CD4-positive, alpha-beta T cell (primary cell): ENCODE measurements at regions of chr15 and their contacts with region 1.

Region 1: GRCh38 chr15:75639709-75640482 is at the start of gene IMP3:
- DNase-seq: peak; percentile 84 to 97 (median 90)
- ATAC-seq: peak; percentile 90
- H3K4me3 ChIP-seq: peak within 1 kb of the TSS; percentile 95
- H3K4me3 Mint-ChIP-seq: peak within 1 kb of the TSS; percentile 89
- H3K27ac ChIP-seq: peak within 1 kb of the TSS; percentile 92
- H3K27ac Mint-ChIP-seq: peak within 1 kb of the TSS; percentile 85
- H3K4me1 ChIP-seq: peaks cover 56% of the 10 kb centered on the region
- H3K4me1 Mint-ChIP-seq: peaks cover 35% of the 10 kb centered on the region
- H3K27me3 ChIP-seq: no peaks in the 10 kb centered on the region
- H3K27me3 Mint-ChIP-seq: no peaks in the 10 kb centered on the region
- CTCF ChIP-seq: no peak
- total RNA-seq, gene IMP3: 48.4 to 50.4 TPM

Region 2: DNA sequence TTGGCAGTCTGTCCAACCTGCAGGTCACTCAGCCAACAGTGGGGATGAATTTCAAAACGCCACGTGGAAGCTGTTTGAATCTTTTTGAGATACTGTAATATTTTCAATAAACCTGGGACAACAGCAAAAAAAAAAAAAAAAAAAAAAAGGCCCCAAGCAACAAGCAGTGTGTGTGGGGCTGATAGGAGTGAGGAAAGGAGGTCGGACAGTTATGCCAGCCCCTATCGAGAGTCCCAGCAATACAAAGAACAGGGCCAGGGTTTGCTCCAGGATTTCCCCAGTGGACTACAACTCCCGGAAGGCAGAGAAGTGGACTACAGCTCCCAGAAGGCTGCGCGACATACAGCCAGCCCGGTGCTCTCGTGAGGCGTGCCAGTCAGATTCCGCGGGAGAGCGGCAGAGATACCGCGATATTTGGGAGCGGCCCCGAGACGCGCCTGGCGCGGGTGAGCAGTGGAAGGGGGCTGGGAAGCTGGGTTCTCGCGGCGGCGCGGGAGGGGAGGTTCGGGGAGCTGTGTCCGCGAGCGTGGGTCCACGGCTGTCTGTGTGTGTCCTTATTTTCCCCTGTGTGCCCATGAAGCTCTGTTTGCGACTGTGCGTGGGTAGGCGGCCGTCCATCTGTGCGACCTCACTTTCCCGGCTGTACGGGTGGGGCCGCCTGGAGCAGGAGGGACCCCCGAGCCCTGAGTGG is 616.6 kb before region 1 on chr15 and contains the start of gene PPCDC:
- CTCF ChIA-PET with region 1: no interaction called
- POLR2A ChIA-PET with region 1: interaction called, 7 read pairs
- intact Hi-C with region 1: loop called in 1 of 2 experiments (anchors 5 kb)
- DNase-seq: peak; percentile 83 to 96 (median 90)
- ATAC-seq: peak; percentile 100
- H3K4me3 ChIP-seq: peak within 1 kb of the TSS; percentile 81
- H3K4me3 Mint-ChIP-seq: peak within 1 kb of the TSS; percentile 99
- H3K27ac ChIP-seq: peak within 1 kb of the TSS; percentile 46 to 50
- H3K27ac Mint-ChIP-seq: peak within 1 kb of the TSS; percentile 94
- H3K4me1 ChIP-seq: peaks cover 20% of the 10 kb centered on the region
- H3K4me1 Mint-ChIP-seq: peaks cover 23% of the 10 kb centered on the region
- H3K27me3 ChIP-seq: no peaks in the 10 kb centered on the region
- H3K27me3 Mint-ChIP-seq: no peaks in the 10 kb centered on the region
- CTCF ChIP-seq: no peak
- total RNA-seq, gene PPCDC: 5.5 to 5.8 TPM

Region 3: DNA sequence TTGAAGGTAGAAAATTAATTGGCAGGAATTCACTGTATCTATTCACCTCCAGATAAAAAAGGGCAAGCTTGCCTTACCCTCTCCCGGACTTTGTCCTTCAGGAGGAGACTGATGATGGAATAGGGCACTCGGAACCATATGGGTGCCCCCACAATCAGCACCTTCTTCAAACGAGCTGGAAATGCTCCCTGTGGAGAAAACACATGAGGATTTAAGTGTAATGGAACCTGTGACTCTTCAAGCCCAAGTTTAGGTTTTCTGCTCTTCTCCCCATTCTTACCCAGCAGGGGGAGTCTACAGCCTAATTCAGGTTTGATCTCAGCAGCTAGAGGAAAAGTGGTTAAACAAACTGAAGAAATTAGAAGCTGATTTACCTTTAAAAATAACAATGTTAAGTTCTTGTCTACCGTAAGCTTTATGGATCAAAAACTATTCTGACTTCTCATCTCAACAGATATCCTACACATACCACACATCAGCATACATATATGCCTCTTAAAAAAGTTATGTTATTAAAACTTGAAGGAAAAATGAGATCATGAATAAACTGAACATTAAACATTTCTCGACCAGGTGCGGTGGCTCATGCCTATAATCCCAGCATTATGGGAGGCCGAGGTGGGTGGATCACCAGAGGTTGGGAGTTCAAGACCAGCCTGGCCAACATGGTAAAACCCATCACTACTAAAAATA is 130.9 kb before region 1 on chr15:
- CTCF ChIA-PET with region 1: interaction called, 30 read pairs
- POLR2A ChIA-PET with region 1: interaction called, 27 read pairs
- intact Hi-C with region 1: loop called (anchors 1 kb)
- DNase-seq: peak in 6 of 14 experiments; percentile 15 to 64 (median 48)
- ATAC-seq: peak; percentile 34
- H3K4me3 ChIP-seq: no peak overlapping the region
- H3K4me3 Mint-ChIP-seq: no peak overlapping the region
- H3K27ac ChIP-seq: no peak overlapping the region
- H3K27ac Mint-ChIP-seq: peak overlapping the region; percentile 13
- H3K4me1 ChIP-seq: no peaks in the 10 kb centered on the region
- H3K4me1 Mint-ChIP-seq: no peaks in the 10 kb centered on the region
- H3K27me3 ChIP-seq: no peaks in the 10 kb centered on the region
- H3K27me3 Mint-ChIP-seq: no peaks in the 10 kb centered on the region
- CTCF ChIP-seq: peak; percentile 60

Region 4: DNA sequence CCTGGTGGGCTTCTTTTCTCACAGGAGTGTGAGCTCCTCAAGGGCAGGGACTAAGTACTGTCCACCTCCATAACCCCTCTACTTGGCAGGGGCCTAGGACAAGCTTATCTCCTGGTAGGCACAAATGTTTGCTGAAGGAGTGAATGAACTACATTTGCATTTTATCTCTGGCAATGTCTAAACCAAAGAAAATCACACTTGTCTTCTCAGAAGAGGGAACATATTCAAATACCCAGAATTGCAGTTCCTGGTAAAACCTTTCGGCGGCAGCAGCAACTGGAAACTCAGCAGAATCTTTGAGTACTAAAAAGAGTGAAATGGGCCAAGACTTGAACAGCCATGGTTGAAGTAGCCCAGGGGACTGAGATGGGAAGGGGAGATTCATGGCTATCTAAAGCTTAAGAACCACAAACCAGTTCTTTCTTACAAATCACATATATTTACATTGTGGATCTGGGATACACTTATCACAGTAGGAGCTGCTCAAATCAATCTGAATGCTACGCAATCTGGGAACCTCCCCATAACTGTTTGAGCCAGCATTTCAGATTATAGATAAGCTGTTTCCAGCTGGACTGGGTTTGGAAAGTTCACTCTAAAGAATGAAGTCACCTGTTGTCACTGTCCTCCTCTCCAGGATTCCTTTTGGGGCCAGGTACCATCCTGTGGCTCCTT is 42.1 kb before region 1 on chr15:
- CTCF ChIA-PET with region 1: interaction called, 8 read pairs
- POLR2A ChIA-PET with region 1: interaction called, 6 read pairs
- intact Hi-C with region 1: loop called in 1 of 2 experiments (anchors 1 kb)
- DNase-seq: peak in 8 of 14 experiments; percentile 10 to 62 (median 37)
- ATAC-seq: peak; percentile 32
- H3K4me3 ChIP-seq: no peak overlapping the region
- H3K4me3 Mint-ChIP-seq: no peak overlapping the region
- H3K27ac ChIP-seq: no peak overlapping the region
- H3K27ac Mint-ChIP-seq: no peak overlapping the region
- H3K4me1 ChIP-seq: peaks cover 17% of the 10 kb centered on the region
- H3K4me1 Mint-ChIP-seq: peaks cover 19% of the 10 kb centered on the region
- H3K27me3 ChIP-seq: no peaks in the 10 kb centered on the region
- H3K27me3 Mint-ChIP-seq: no peaks in the 10 kb centered on the region
- CTCF ChIP-seq: peak; percentile 53

Region 5: DNA sequence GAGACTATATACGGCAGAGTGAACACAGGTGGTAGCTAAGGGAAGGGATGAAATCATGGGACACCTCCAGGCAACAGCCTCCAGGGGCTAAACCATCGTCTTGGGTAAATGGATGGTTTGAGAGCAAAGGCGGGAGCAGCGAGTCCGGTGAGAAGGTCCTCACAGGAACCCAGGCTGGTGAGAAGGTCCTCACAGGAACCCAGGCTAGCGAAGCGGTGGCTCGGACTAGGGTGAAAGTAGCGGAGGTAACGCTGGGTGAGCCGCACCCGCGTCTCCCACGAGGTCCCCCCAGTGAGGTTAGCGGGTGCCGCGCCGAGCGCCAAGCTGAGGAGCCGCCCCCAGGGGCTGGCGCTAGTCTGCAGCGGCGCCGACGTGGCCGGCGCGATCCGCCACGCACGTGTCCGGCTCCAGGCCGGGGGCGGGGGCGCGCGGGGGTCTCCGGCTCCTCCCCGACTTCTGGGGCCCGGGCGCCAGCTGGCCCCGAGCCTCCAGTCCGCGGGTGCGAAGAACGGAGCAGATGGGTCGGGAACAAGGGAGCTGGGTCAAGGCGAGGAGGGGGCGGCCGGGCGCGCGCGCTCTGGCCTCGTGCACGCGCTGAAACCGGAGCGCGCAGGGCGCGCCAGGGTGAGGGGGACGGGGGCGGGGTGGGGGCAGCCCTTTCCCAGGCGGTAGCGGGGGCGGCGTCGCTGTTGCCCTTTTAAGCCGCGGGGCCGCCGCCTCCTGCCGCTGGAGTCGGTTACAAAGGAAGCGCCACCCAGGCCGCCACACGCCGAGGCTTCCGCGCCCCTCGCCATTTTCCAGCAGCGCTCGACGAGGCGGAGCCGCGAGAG is 203.0 kb after region 1 on chr15 and contains the start of gene UBE2Q2:
- CTCF ChIA-PET with region 1: no interaction called
- POLR2A ChIA-PET with region 1: interaction called, 15 read pairs
- intact Hi-C with region 1: no loop called
- DNase-seq: peak; percentile 53 to 88 (median 68)
- ATAC-seq: peak; percentile 55
- H3K4me3 ChIP-seq: peak within 1 kb of the TSS; percentile 83
- H3K4me3 Mint-ChIP-seq: peak within 1 kb of the TSS; percentile 93
- H3K27ac ChIP-seq: peak within 1 kb of the TSS; percentile 57 to 60
- H3K27ac Mint-ChIP-seq: peak within 1 kb of the TSS; percentile 91
- H3K4me1 ChIP-seq: peaks cover 30% of the 10 kb centered on the region
- H3K4me1 Mint-ChIP-seq: peaks cover 44% of the 10 kb centered on the region
- H3K27me3 ChIP-seq: no peaks in the 10 kb centered on the region
- H3K27me3 Mint-ChIP-seq: no peaks in the 10 kb centered on the region
- CTCF ChIP-seq: no peak
- total RNA-seq, gene UBE2Q2: 29.3 to 33.5 TPM

Region 6: DNA sequence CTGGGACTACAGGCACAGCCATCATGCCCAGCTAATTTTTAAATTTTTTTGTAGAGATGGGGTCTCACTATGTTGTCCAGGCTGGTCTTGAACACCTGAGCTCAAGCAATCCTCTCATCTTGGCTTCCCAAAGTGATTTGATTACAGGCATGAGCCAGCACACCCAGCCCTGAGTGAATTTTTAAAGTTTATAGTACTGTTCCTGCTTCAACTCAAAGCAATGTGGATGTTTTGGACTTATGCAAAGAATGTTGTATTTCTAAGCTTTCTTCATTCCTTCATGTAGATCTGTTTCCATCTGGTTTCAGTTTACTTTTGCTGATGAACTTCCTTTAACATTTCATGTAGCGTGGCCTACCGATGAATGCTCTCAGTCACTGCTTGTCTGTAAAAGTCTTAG is 349.1 kb after region 1 on chr15:
- CTCF ChIA-PET with region 1: no interaction called
- POLR2A ChIA-PET with region 1: no interaction called
- intact Hi-C with region 1: no loop called
- DNase-seq: no peak
- ATAC-seq: no peak
- H3K4me3 ChIP-seq: no peak overlapping the region
- H3K4me3 Mint-ChIP-seq: no peak overlapping the region
- H3K27ac ChIP-seq: no peak overlapping the region
- H3K27ac Mint-ChIP-seq: no peak overlapping the region
- H3K4me1 ChIP-seq: no peaks in the 10 kb centered on the region
- H3K4me1 Mint-ChIP-seq: no peaks in the 10 kb centered on the region
- H3K27me3 ChIP-seq: no peaks in the 10 kb centered on the region
- H3K27me3 Mint-ChIP-seq: peaks cover 7% of the 10 kb centered on the region
- CTCF ChIP-seq: no peak